ENCODE measurements at regions of chr1 and their contacts with region 1.

Region 1: GRCh38 chr1:63327417-63328139 is 5.2 kb downstream of the FOXD3 start:
- DNase-seq: peak; percentile 62 to 97
- H3K4me3 ChIP-seq: peak overlapping the region in 3 of 4 experiments; percentile 2 to 80 (median 25); a peak in 4 of 8 replicates
- H3K27ac ChIP-seq: no peak overlapping the region
- H3K4me1 ChIP-seq: peaks cover 6 to 41% (median 18%) of the 10 kb centered on the region in 4 experiments
- H3K27me3 ChIP-seq: peaks cover 0 to 77% (median 46%) of the 10 kb centered on the region in 4 experiments; a peak in 5 of 7 replicates
- CTCF ChIP-seq: peak; percentile 83 to 99 (median 98)
- EP300 ChIP-seq: no peak
- POLR2A ChIP-seq: no peak
- RAD21 ChIP-seq: peak; percentile 78

Region 2: DNA sequence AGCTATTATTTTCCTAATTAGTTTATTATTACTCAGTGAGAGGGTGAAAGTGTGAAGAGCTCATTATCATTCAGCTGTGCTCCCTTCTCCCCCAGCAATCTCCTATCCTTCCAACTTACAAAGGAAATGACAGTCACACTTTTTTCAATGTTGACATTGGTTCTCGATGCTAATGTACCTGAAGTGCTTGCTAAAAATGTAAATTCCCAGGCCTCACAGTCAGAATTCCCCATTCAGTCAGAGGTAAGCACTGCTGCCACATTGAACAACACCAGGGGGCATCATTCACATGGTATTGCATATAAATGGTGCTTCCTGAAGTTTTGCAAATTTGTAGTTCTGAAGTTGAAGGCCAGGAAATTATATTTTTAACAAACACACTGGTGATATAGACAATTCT is 137.9 kb before region 1 on chr1:
- CTCF ChIA-PET with region 1: interaction called, 24 read pairs
- POLR2A ChIA-PET with region 1: interaction called, 3 read pairs
- DNase-seq: peak in 1 of 2 experiments; percentile 70
- H3K4me3 ChIP-seq: peak overlapping the region in 1 of 4 experiments; percentile 23; a peak in 1 of 8 replicates
- H3K27ac ChIP-seq: no peak overlapping the region
- H3K4me1 ChIP-seq: peaks cover 2 to 21% (median 10%) of the 10 kb centered on the region in 4 experiments; a peak in 5 of 7 replicates
- H3K27me3 ChIP-seq: peaks cover 0 to 2% (median 0%) of the 10 kb centered on the region in 4 experiments; a peak in 2 of 7 replicates
- CTCF ChIP-seq: peak in 2 of 3 experiments; percentile 58 to 71; a peak in 3 of 4 replicates
- EP300 ChIP-seq: no peak
- POLR2A ChIP-seq: no peak
- RAD21 ChIP-seq: peak; percentile 54 to 70

Region 3: DNA sequence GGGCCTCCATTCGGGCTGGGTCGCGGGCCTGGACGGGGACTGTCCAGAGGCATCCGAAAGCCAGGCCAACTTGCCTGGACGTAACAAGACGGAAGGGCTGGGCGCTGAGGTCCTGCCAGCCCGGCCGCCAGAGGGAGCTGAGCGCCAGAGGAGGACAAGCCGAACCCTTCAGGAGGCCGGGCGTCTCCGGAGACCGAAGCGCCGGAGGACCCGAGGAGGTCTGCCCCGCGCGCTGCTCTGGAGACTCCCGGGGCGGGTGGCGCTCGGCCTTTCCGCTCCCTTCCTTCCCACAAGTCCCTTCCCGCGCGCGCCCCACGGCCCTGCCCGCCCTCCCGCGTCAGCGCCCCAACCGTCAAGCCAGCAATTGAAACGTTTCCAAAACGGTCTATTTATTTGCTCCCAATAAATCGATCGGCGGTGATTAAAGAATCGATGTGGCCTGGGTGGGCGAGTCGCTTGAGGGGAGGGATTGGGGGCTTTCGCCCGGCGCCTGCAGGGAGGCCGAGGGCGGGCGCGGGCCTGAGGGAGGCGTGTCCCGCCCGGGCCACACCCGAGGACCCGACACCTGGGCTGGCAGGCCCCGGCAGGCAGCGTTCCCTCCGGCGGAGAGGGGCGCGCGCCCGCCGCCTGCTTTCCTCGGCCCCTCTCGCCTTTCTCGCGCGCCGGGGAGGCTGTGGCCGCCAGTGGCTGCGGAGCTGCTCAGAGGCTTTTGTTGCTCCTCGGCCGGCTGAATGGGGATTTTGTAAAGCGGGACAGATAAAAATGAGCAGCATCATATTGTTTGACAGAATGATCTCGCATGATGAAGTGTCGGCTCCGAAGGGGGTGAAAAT is 10.4 kb before region 1 on chr1:
- CTCF ChIA-PET with region 1: interaction called, 71 read pairs
- POLR2A ChIA-PET with region 1: interaction called, 32 read pairs
- DNase-seq: peak in 1 of 2 experiments; percentile 93
- H3K4me3 ChIP-seq: peak overlapping the region; percentile 26 to 80 (median 32)
- H3K27ac ChIP-seq: no peak overlapping the region
- H3K4me1 ChIP-seq: peaks cover 4 to 22% (median 12%) of the 10 kb centered on the region in 4 experiments
- H3K27me3 ChIP-seq: peaks cover 3 to 37% (median 21%) of the 10 kb centered on the region in 4 experiments; a peak in 6 of 7 replicates
- CTCF ChIP-seq: peak; percentile 75 to 87 (median 84)
- EP300 ChIP-seq: no peak
- POLR2A ChIP-seq: peak in 1 of 2 experiments; percentile 25; a peak in 2 of 3 replicates
- RAD21 ChIP-seq: peak; percentile 57 to 75

Region 4: DNA sequence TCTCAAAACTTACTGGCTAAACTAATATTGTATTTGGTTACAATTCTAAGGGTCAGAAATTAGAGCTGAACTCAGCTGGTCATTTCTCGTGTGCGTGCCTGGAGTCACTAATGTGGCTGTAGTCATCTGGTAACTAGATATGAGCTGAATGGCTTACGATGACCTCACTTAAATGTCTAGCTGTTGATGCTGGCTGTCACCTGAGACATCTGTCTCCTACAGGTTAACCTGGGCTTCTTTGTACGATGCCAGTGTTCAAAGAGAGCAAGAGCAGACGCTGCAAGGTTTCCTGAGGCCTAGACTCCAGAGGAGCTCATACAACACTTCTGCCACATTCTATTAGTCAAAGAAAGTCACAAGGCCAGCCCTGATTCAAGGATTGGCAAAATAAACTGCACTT is 22.7 kb after region 1 on chr1:
- CTCF ChIA-PET with region 1: interaction called, 18 read pairs
- POLR2A ChIA-PET with region 1: interaction called, 11 read pairs
- DNase-seq: no peak
- H3K4me3 ChIP-seq: no peak overlapping the region
- H3K27ac ChIP-seq: no peak overlapping the region
- H3K4me1 ChIP-seq: no peaks in the 10 kb centered on the region
- H3K27me3 ChIP-seq: no peaks in the 10 kb centered on the region
- CTCF ChIP-seq: no peak
- EP300 ChIP-seq: no peak
- POLR2A ChIP-seq: no peak
- RAD21 ChIP-seq: no peak

Region 5: DNA sequence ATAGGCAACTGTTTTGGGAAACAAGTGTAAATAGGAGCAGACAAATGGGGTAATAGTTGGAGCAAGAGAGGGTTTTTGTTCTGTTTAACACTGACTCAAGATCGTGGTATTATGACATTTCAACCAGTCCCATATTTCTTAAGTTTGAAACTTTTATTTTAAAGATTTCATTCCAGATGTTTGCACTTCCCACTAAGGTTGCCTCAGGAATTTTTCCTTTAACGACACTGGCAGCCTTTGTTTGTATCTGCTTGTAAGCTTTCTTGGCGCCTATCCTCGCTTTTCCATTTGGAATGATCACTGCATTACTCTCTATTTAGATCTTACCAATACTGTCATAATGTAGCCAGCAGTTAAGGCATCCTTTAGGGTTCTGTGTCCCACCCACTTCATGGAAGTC is 107.6 kb after region 1 on chr1:
- CTCF ChIA-PET with region 1: interaction called, 10 read pairs
- POLR2A ChIA-PET with region 1: interaction called, 3 read pairs
- DNase-seq: no peak
- H3K4me3 ChIP-seq: no peak overlapping the region
- H3K27ac ChIP-seq: no peak overlapping the region
- H3K4me1 ChIP-seq: no peaks in the 10 kb centered on the region
- H3K27me3 ChIP-seq: no peaks in the 10 kb centered on the region
- CTCF ChIP-seq: no peak
- EP300 ChIP-seq: no peak
- POLR2A ChIP-seq: no peak
- RAD21 ChIP-seq: no peak